Dendritic cell treated with granulocyte-macrophage colony-stimulating factor and Interleukin-4, amounts not matched to agents 40 ng/mL and 50 ng/mL, for 4 days (primary cell): ENCODE measurements at regions of chr20 and their contacts with region 1.

Region 1: GRCh38 chr20:1535420-1536175 is 21.9 kb downstream of the SIRPD start:
- H3K4me3 Mint-ChIP-seq: no peak overlapping the region
- H3K27ac Mint-ChIP-seq: peak overlapping the region; percentile 97
- H3K4me1 Mint-ChIP-seq: peaks cover 63% of the 10 kb centered on the region
- H3K27me3 Mint-ChIP-seq: no peaks in the 10 kb centered on the region

Region 2: DNA sequence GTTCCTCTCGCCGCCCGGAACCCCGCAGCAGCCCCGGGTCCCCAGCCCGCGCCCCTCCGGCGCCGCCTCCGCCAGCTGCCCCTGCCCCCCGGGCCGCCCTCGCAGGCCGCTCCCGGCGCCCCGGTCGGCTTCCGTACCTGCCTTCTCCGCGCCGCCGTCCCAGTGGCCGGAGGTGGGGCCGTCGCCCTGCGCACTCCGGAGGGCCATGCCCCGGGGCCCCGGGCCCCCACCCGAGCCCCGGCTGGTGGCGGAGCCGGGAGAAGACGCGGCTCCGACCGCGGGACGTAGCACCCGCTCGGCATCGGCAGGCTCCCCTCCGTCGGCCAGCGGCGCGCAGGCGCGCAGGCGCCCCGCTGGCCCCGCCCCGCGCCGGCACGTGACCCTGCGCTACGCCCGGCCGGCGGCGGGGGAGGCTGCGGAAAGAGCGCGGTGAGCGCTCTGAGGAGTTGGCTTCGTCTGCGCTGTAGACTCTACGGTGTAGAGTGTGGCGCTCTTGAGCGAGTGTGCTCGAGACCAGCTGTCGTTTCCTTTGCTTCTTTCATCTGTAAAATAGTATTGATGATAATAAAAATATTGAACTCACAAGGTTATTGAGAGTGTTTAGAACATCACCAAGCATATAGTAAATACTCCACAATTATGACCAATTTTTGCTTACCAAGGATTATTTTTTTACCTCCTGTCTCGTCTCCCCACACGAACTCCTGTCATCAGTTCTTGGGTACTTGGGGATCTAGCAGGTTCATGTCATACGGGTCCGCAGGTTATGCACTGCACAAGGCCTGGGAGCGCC is 1073.2 kb before region 1 on chr20 and contains the start of gene TBC1D20:
- intact Hi-C with region 1: no loop called
- H3K4me3 Mint-ChIP-seq: peak within 1 kb of the TSS; percentile 89
- H3K27ac Mint-ChIP-seq: peak within 1 kb of the TSS; percentile 83
- H3K4me1 Mint-ChIP-seq: peaks cover 36% of the 10 kb centered on the region
- H3K27me3 Mint-ChIP-seq: peaks cover 8% of the 10 kb centered on the region

Region 3: GRCh38 chr20:1567392-1568162 is 32.0 kb after region 1 on chr20:
- intact Hi-C with region 1: loop called (anchors 2 kb)
- H3K4me3 Mint-ChIP-seq: no peak overlapping the region
- H3K27ac Mint-ChIP-seq: peak overlapping the region; percentile 61
- H3K4me1 Mint-ChIP-seq: peaks cover 80% of the 10 kb centered on the region
- H3K27me3 Mint-ChIP-seq: no peaks in the 10 kb centered on the region

Region 4: GRCh38 chr20:1619861-1620444 is 84.4 kb after region 1 on chr20 and contains the start of gene SIRPB1:
- intact Hi-C with region 1: loop called (anchors 2 kb)
- H3K4me3 Mint-ChIP-seq: peak within 1 kb of the TSS; percentile 63
- H3K27ac Mint-ChIP-seq: peak within 1 kb of the TSS; percentile 89
- H3K4me1 Mint-ChIP-seq: peaks cover 84% of the 10 kb centered on the region
- H3K27me3 Mint-ChIP-seq: no peaks in the 10 kb centered on the region

Region 5: DNA sequence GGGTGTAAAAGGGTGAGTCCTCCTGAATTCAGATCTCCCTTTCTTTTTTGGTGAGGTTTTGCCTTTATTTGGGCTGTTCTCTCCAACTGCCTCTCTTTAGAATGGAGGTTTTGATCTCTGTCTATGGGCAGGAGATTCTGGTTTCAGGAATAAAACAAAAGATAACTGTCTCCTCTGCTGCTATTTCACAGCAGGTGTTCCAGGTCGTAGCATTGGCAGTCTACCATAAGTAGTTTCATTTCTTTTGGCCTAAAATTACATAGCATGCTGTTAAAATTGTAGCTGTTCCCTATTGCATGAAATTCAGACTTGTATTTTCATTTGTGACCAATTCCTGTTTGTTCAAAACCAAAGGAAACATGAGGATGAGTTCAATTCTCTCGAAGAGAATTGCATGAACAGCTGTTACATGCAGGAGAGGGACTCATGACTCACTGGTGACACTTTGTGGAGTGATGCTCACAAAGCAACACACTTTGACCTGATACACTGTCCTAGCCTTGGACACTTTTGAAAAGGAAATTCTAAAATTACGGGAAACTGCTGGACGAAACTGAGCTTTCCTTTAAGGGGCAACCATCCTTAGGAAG is 198.8 kb after region 1 on chr20:
- intact Hi-C with region 1: loop called (anchors 10 kb)
- H3K4me3 Mint-ChIP-seq: no peak overlapping the region
- H3K27ac Mint-ChIP-seq: peak overlapping the region; percentile 24
- H3K4me1 Mint-ChIP-seq: peaks cover 15% of the 10 kb centered on the region
- H3K27me3 Mint-ChIP-seq: peaks cover 2% of the 10 kb centered on the region